Natural killer cell (primary cell): ENCODE measurements at regions of chr7 and their contacts with region 1.

Region 1: GRCh38 chr7:26200444-26201246 is at the start of gene HNRNPA2B1:
- DNase-seq: peak; percentile 98 to 99
- ATAC-seq: peak; percentile 69 to 87 (median 69)
- H3K4me3 ChIP-seq: peak within 1 kb of the TSS; percentile 87
- H3K4me3 Mint-ChIP-seq: peak within 1 kb of the TSS; percentile 100
- H3K27ac ChIP-seq: peak within 1 kb of the TSS; percentile 95
- H3K27ac Mint-ChIP-seq: peak within 1 kb of the TSS; percentile 100
- H3K4me1 ChIP-seq: peaks cover 14% of the 10 kb centered on the region
- H3K4me1 Mint-ChIP-seq: peaks cover 84 to 85% of the 10 kb centered on the region in 2 donors
- H3K27me3 ChIP-seq: no peaks in the 10 kb centered on the region
- H3K27me3 Mint-ChIP-seq: peaks cover 2 to 5% of the 10 kb centered on the region in 2 donors
- CTCF ChIP-seq: no peak
- total RNA-seq, gene HNRNPA2B1: 473 to 627 (median 585) TPM

Region 2: GRCh38 chr7:25894902-25895791 is 305.5 kb before region 1 on chr7:
- intact Hi-C with region 1: loop called (anchors 2 kb)
- DNase-seq: peak; percentile 57 to 70
- ATAC-seq: peak; percentile 56 to 74 (median 70)
- H3K4me3 ChIP-seq: no peak overlapping the region
- H3K4me3 Mint-ChIP-seq: peak overlapping the region; percentile 77
- H3K27ac ChIP-seq: no peak overlapping the region
- H3K27ac Mint-ChIP-seq: peak overlapping the region in 1 of 2 donors; percentile 56
- H3K4me1 ChIP-seq: peaks cover 10% of the 10 kb centered on the region
- H3K4me1 Mint-ChIP-seq: peaks cover 16 to 28% of the 10 kb centered on the region in 2 donors
- H3K27me3 ChIP-seq: peaks cover 6% of the 10 kb centered on the region
- H3K27me3 Mint-ChIP-seq: peaks cover 31 to 41% of the 10 kb centered on the region in 2 donors
- CTCF ChIP-seq: peak; percentile 68

Region 3: GRCh38 chr7:26151953-26152781 is 48.5 kb before region 1 on chr7 and contains the start of gene NFE2L3:
- intact Hi-C with region 1: loop called (anchors 2 kb)
- DNase-seq: peak; percentile 69 to 91
- ATAC-seq: peak; percentile 79 to 91 (median 89)
- H3K4me3 ChIP-seq: peak within 1 kb of the TSS; percentile 52
- H3K4me3 Mint-ChIP-seq: peak within 1 kb of the TSS; percentile 85
- H3K27ac ChIP-seq: peak within 1 kb of the TSS; percentile 52
- H3K27ac Mint-ChIP-seq: peak within 1 kb of the TSS; percentile 47 to 82
- H3K4me1 ChIP-seq: peaks cover 44% of the 10 kb centered on the region
- H3K4me1 Mint-ChIP-seq: peaks cover 32 to 40% of the 10 kb centered on the region in 2 donors
- H3K27me3 ChIP-seq: no peaks in the 10 kb centered on the region
- H3K27me3 Mint-ChIP-seq: peaks cover 11 to 12% of the 10 kb centered on the region in 2 donors
- CTCF ChIP-seq: no peak
- total RNA-seq, gene NFE2L3: 0.68 to 2.0 (median 1.00) TPM

Region 4: GRCh38 chr7:26237035-26237807 is 36.6 kb after region 1 on chr7:
- intact Hi-C with region 1: no loop called
- DNase-seq: no peak
- ATAC-seq: no peak
- H3K4me3 ChIP-seq: no peak overlapping the region
- H3K4me3 Mint-ChIP-seq: no peak overlapping the region
- H3K27ac ChIP-seq: no peak overlapping the region
- H3K27ac Mint-ChIP-seq: no peak overlapping the region
- H3K4me1 ChIP-seq: no peaks in the 10 kb centered on the region
- H3K4me1 Mint-ChIP-seq: no peaks in the 10 kb centered on the region
- H3K27me3 ChIP-seq: no peaks in the 10 kb centered on the region
- H3K27me3 Mint-ChIP-seq: peaks cover 0 to 7% of the 10 kb centered on the region in 2 donors
- CTCF ChIP-seq: no peak

Region 5: GRCh38 chr7:26278770-26279169 is 78.1 kb after region 1 on chr7:
- intact Hi-C with region 1: loop called (anchors 5 kb)
- DNase-seq: peak in 1 of 2 donors; percentile 58
- ATAC-seq: peak; percentile 61 to 75 (median 71)
- H3K4me3 ChIP-seq: no peak overlapping the region
- H3K4me3 Mint-ChIP-seq: peak overlapping the region; percentile 50
- H3K27ac ChIP-seq: peak overlapping the region; percentile 38
- H3K27ac Mint-ChIP-seq: no peak overlapping the region
- H3K4me1 ChIP-seq: peaks cover 8% of the 10 kb centered on the region
- H3K4me1 Mint-ChIP-seq: peaks cover 7 to 8% of the 10 kb centered on the region in 2 donors
- H3K27me3 ChIP-seq: no peaks in the 10 kb centered on the region
- H3K27me3 Mint-ChIP-seq: no peaks in the 10 kb centered on the region
- CTCF ChIP-seq: peak; percentile 27

Region 6: DNA sequence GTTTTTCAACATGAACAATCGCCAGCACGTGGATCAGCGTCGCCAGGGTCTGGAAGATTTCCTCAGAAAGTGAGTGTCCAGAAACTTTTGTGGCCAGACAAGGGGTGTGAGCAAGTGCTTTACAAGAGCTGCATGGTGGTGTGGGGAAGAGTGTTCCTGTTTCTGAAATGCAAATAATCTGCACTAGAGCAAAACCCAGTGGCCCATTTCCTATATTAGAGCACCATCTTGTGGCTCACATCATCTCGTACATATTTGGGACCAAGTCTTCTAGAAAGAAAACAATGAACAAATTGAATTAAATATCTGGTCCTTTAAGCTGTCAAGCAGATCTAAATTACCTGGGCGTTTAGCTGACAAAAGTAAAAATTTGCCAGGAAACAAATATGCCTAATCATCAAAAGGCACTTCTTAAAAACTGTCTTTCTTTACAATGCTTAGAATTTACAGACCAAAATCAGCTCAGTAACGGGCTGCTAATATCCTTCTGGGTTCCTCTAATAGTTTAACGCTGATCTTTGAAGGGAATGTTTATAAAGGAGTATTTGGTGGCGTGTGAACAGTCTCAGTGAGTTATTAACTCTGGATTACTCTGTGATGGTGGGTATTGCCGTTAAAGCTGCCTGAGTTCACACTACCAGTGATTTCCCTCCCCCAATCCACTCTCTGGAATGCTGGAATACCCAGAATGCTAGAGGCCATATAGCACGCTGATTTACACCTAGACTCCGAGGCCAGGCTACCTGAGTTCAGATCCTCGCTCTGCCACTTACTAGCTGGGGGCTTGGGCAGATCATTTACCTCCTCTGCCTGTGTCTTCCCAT is 164.6 kb after region 1 on chr7:
- intact Hi-C with region 1: loop called (anchors 5 kb)
- DNase-seq: peak in 1 of 2 donors; percentile 85
- ATAC-seq: peak; percentile 79 to 88 (median 84)
- H3K4me3 ChIP-seq: no peak overlapping the region
- H3K4me3 Mint-ChIP-seq: no peak overlapping the region
- H3K27ac ChIP-seq: no peak overlapping the region
- H3K27ac Mint-ChIP-seq: peak overlapping the region in 1 of 2 donors; percentile 61
- H3K4me1 ChIP-seq: no peaks in the 10 kb centered on the region
- H3K4me1 Mint-ChIP-seq: peaks cover 5 to 11% of the 10 kb centered on the region in 2 donors
- H3K27me3 ChIP-seq: no peaks in the 10 kb centered on the region
- H3K27me3 Mint-ChIP-seq: no peaks in the 10 kb centered on the region
- CTCF ChIP-seq: peak; percentile 84